ENCODE measurements at regions of chr2 and their contacts with region 1.

Region 1: DNA sequence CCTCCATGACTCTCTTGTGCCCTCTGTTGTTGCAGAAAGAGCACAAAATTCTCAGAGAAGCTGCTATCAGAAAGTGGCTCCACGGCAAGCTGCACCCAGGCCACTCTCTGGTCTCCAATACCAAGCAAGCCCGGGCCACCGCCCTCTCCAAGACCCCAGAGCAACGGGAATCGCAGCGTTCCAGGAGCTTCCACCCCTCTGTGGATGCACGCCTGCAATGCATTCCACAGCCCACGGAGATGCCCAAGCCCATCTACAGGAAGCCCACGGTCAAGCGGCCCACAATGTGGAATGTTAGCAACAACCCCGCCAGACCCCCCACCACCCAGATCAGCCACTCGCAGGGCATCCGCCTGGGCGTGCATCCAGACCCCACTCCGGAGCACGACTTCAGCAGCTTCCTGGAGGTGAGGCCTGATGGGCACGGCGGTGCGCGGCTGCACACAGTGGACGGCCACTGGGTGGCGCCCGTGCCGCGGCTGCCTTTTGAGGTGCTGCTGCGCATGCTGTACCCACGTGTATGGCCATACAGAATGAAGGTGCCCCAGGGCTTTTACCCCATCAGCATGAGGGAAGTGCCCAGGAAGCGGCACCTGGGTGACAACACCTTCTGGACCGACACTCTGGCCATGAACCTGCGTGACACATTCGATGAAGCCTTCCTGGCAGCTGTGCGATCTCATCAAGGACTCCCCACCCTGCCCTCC is 6.3 kb downstream of the ANKRD53 start:
- DNase-seq: no peak
- H3K4me3 ChIP-seq: no peak overlapping the region
- H3K27me3 ChIP-seq: no peaks in the 10 kb centered on the region
- CTCF ChIP-seq: peak; percentile 83

Region 2: DNA sequence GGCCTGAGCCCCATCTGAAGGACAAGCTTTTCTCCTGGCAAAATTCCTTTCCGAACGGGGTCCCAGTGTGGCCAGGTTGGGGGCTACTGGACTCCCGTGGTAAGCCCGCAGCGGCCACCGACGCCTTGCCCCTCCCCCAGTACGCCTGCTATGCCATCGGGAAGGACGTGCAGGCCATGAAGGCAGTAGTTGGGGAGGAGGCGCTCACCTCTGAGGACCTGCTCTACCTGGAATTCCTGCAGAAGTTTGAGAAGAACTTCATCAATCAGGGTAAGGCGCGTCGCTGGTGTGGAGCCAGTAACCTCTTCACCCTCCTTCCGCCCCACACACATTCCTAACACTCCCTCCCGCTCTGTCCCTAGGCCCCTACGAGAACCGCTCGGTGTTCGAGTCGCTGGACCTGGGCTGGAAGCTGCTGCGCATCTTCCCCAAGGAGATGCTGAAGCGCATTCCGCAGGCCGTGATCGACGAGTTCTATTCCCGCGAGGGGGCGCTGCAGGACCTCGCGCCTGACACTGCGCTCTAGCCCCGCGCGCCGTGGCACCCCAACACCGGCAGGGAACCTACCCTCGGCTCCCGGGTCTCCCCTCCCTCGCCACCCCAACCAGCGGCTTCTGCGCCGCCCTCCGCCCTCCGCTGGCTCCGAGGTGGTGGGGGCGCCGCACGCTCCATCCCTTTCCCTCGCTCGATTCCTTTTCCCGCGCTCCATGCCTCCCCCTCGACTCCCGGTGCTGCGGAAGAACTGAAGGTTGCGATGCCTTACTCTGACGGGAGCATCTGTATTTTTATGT is 19.9 kb before region 1 on chr2:
- CTCF ChIA-PET with region 1: interaction called, 44 read pairs
- POLR2A ChIA-PET with region 1: no interaction called
- DNase-seq: no peak
- H3K4me3 ChIP-seq: peak overlapping the region; percentile 37
- H3K27me3 ChIP-seq: peaks cover 1% of the 10 kb centered on the region; the same call in 1 of the 2 replicates
- CTCF ChIP-seq: peak; percentile 83

Region 3: GRCh38 chr2:70994756-70995729 is 10.3 kb after region 1 on chr2 and contains the start of gene TEX261:
- CTCF ChIA-PET with region 1: interaction called, 12 read pairs
- POLR2A ChIA-PET with region 1: interaction called, 3 read pairs
- DNase-seq: peak; percentile 19
- H3K4me3 ChIP-seq: peak within 1 kb of the TSS; percentile 85
- H3K27me3 ChIP-seq: no peaks in the 10 kb centered on the region
- CTCF ChIP-seq: peak; percentile 65
- polyA plus RNA-seq, gene TEX261: 83.2 and 101 TPM in 2 replicates

Region 4: GRCh38 chr2:71000780-71001591 is 16.3 kb after region 1 on chr2:
- CTCF ChIA-PET with region 1: interaction called, 17 read pairs
- POLR2A ChIA-PET with region 1: no interaction called
- DNase-seq: no peak
- H3K4me3 ChIP-seq: peak overlapping the region; percentile 17
- H3K27me3 ChIP-seq: peaks cover 4% of the 10 kb centered on the region
- CTCF ChIP-seq: peak; percentile 96

Region 5: DNA sequence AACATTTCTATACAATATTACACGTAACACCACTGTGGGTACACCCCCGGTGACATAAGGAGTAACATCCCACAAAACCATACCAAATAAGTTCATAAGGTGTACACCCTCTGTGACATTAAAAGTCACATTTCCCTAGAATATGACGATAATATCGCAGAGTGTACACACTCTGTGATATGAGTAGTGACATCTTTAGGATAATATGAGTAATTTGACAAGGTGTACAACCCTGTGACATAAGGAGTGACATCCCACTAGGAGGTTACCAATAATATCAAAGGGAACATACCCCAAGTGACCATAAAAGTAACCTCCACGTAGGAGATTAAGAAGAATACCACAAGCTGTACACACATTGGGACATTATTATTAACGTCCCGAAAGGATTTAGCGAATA is 33.9 kb after region 1 on chr2:
- CTCF ChIA-PET with region 1: no interaction called
- POLR2A ChIA-PET with region 1: no interaction called
- DNase-seq: no peak
- H3K4me3 ChIP-seq: no peak overlapping the region
- H3K27me3 ChIP-seq: no peaks in the 10 kb centered on the region
- CTCF ChIP-seq: no peak

Region 6: DNA sequence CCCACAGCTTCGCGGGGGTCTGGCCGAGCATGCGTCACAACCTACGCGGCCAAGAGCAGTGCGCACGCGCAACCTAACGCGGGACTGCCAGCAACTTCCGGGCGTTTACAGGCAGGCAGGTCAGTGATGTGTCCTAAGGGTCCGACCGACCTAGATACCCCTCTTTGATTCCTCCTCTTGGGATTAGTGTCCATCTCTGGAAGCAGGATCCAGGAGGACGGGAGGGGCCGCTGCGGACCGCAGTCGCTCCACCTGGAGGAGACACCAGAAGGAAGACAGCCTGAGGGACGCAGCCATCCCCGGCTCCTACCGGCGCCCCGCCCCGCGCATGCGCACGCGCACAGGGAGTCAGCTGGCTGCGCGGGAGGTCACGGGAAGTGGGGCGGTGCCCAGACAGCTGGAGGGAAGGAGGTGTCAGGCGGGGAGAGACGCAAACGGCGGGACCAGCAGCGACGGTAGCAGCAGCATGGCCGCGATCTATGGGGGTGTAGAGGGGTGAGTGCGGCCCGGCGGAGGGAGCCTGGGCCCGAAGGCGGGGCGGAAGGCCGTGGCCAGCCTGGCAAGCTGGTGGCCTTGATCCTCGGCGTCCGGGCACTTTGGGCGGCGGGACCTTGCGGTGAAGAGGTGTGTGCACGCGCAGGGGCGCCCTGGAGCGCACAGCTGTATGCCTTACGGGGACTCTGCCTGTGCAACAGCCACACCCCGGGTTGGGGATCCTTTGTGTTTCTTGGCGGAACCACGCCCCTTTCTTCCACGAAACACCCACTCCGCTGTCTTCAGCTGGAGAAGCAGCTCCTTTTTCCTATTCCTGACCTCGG is 83.7 kb after region 1 on chr2 and contains the start of gene NAGK:
- CTCF ChIA-PET with region 1: interaction called, 11 read pairs
- POLR2A ChIA-PET with region 1: no interaction called
- DNase-seq: peak; percentile 71
- H3K4me3 ChIP-seq: peak within 1 kb of the TSS; percentile 71
- H3K27me3 ChIP-seq: 0 out of 2 replicates have a peak, but pooled peaks cover 1% of the 10 kb centered on the region
- CTCF ChIP-seq: no peak
- polyA plus RNA-seq, gene NAGK: 99.7 and 118 TPM in 2 replicates